Gastrocnemius medialis (tissue), 4 donors: ENCODE measurements at regions of chr5 and their contacts with region 1.

Region 1: DNA sequence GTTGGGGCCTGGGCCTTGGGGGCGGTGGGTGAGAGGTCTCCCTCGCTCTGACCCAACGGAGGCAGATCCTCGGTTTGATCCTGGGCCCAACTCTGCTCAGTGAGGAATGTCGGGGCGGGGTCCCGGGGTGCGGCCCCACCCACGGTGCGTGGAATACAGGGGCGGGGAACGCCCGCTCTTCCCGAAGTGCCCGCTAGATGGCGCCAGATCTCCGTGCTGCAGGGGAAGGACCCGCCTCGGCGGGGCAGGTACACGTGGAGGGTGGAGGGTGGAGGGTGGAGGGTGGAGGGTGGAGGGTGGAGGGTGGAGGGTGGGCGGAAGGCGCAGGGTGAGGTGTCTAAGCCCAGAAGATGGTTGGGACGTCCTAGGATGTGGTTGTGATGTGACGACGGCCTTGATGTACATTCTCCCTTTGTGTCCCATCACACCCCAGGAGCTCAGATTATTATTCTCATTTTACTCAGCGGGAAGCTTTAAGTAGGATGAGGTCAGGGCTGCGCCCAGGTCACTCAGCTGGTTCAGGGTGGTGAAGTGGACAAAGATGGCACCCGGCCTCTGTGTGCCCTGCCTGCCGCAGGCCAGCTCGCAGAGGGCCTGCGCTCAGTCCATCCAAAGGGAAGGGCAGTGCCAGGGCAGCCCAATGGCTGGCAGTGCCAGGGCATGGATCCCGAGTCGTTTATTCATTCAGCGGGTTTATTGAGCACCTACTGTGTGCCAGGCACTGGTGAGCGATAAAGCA is 9.4 kb upstream of the RPS14 start:
- DNase-seq: peak; percentile 29 to 65
- ATAC-seq: peak; percentile 79
- H3K4me3 ChIP-seq: peak overlapping the region in 1 of 4 donors; percentile 29
- H3K27ac ChIP-seq: peak overlapping the region in 3 of 4 donors; percentile 18 to 80 (median 60)
- H3K4me1 ChIP-seq: peaks cover 19 to 23% of the 10 kb centered on the region in 2 donors
- H3K27me3 ChIP-seq: no peaks in the 10 kb centered on the region
- CTCF ChIP-seq: peak; percentile 71 to 96 (median 91)
- POLR2A ChIP-seq: no peak

Region 2: GRCh38 chr5:150320048-150320555 is 138.9 kb before region 1 on chr5:
- in situ Hi-C with region 1: no loop called
- intact Hi-C with region 1: no loop called
- DNase-seq: peak; percentile 71 to 73
- ATAC-seq: peak; percentile 82 to 92
- H3K4me3 ChIP-seq: no peak overlapping the region
- H3K27ac ChIP-seq: peak overlapping the region; percentile 24 to 66 (median 41)
- H3K4me1 ChIP-seq: peaks cover 0 to 9% of the 10 kb centered on the region in 2 donors
- H3K27me3 ChIP-seq: no peaks in the 10 kb centered on the region
- CTCF ChIP-seq: no peak
- POLR2A ChIP-seq: no peak

Region 3: GRCh38 chr5:150428106-150428876 is 30.7 kb before region 1 on chr5:
- in situ Hi-C with region 1: no loop called
- intact Hi-C with region 1: no loop called
- DNase-seq: no peak
- ATAC-seq: peak; percentile 46 to 56
- H3K4me3 ChIP-seq: no peak overlapping the region
- H3K27ac ChIP-seq: peak overlapping the region in 3 of 4 donors; percentile 44 to 58 (median 56)
- H3K4me1 ChIP-seq: peaks cover 0 to 12% of the 10 kb centered on the region in 2 donors
- H3K27me3 ChIP-seq: no peaks in the 10 kb centered on the region
- CTCF ChIP-seq: no peak
- POLR2A ChIP-seq: no peak

Region 4: DNA sequence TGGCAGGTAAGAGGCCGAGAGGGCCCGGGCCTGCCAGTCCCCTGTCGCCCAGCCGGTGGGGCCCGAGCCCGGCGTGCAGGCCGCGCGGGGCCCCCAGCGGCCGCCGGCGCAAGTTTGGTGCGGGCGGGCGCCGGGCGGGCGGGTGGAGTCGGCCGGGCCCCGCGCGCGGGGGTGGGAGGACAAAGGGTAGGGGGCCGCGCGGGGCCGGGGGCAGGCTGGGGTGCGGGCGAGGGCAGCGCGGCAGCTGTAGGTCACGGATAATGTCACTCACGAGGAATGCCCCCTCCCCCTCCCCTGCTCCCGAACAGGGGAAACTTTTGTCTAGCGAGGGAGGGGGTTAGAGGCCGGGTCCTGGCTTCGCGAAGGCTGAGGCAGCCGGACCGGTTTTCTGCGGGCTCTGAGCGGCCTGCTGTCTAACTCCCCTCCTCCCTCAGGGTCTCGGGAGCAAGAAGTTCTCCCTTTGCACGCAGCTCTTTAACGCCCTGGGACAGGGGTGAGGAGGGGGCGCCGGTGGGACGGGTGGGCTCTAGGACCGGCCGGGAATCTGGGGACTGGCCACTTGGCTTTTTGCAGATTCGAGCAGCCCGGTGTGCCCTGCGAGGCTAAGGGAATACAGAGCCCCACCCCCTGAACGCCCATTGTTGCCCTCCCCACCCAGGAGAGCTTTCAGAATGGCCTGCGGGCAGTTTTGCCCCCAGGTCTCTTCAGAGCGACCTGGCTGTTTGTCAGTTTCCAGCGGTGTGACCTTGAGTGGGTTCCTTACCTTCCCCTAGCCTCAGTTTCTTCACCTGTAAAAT is 27.6 kb after region 1 on chr5:
- in situ Hi-C with region 1: no loop called
- intact Hi-C with region 1: loop called (anchors 2 kb)
- DNase-seq: peak in 1 of 2 donors; percentile 58
- ATAC-seq: peak; percentile 35 to 46
- H3K4me3 ChIP-seq: peak overlapping the region; percentile 80 to 100 (median 94)
- H3K27ac ChIP-seq: peak overlapping the region; percentile 83 to 98 (median 95)
- H3K4me1 ChIP-seq: peaks cover 48 to 49% of the 10 kb centered on the region in 2 donors
- H3K27me3 ChIP-seq: no peaks in the 10 kb centered on the region
- CTCF ChIP-seq: peak in 1 of 5 experiments; percentile 9
- POLR2A ChIP-seq: no peak

Region 5: DNA sequence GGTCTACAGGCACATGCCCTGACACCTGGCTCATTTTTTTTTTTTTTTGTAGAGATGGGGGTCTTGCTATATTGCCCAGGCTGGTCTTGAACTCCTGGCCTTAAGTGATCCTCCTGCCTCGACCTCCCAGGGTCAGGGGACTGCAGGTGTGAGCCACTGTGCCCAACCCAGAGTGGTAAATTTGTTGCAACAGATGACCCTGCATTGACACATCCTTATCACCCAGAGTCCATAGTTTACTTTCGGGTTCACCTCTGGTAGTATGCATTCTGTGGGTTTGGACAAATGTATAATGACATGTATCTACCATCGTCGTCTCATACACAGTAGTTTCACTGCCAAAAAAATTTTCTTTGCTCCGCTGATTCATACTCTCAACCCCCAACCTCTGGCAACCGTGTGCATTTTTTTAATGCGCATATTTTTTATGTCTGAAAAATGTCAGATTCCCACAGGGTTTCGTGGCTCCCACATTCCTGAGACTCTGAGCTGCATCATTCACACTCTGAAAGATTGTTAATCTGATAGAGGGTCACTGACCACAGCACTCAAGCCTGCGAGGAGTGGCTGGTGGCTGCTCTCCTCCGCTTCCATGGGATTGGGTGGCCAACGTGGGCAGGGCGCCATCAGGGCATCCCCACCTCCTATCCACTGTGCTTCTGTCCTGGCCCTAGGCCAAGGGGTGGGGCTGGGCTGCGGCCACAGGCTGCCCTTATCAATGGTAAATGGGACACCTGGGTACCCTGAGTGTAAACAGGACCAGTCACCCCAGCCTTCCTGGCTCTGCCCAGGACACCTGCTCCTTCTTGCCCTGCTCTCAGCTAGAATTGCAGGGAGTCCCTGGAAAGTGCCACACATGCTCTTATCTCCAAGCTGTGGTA is 58.5 kb after region 1 on chr5:
- in situ Hi-C with region 1: loop called in 1 of 4 experiments (anchors 10 kb)
- intact Hi-C with region 1: no loop called
- DNase-seq: no peak
- ATAC-seq: no peak
- H3K4me3 ChIP-seq: no peak overlapping the region
- H3K27ac ChIP-seq: peak overlapping the region in 1 of 4 donors; percentile 23
- H3K4me1 ChIP-seq: peaks cover 36 to 52% of the 10 kb centered on the region in 2 donors
- H3K27me3 ChIP-seq: no peaks in the 10 kb centered on the region
- CTCF ChIP-seq: no peak
- POLR2A ChIP-seq: no peak

Region 6: GRCh38 chr5:150523472-150524350 is 64.7 kb after region 1 on chr5:
- in situ Hi-C with region 1: loop called in 1 of 4 experiments (anchors 10 kb)
- intact Hi-C with region 1: loop called (anchors 1 kb)
- DNase-seq: peak in 1 of 2 donors; percentile 46
- ATAC-seq: peak; percentile 42 to 58
- H3K4me3 ChIP-seq: no peak overlapping the region
- H3K27ac ChIP-seq: peak overlapping the region; percentile 21 to 79 (median 75)
- H3K4me1 ChIP-seq: peaks cover 55 to 62% of the 10 kb centered on the region in 2 donors
- H3K27me3 ChIP-seq: no peaks in the 10 kb centered on the region
- CTCF ChIP-seq: peak; percentile 52 to 70 (median 62)
- POLR2A ChIP-seq: no peak

Region 7: GRCh38 chr5:150544611-150545219 is 85.7 kb after region 1 on chr5:
- in situ Hi-C with region 1: loop called (anchors 5 kb)
- intact Hi-C with region 1: loop called (anchors 1 kb)
- DNase-seq: peak; percentile 27 to 60
- ATAC-seq: peak; percentile 54 to 72
- H3K4me3 ChIP-seq: no peak overlapping the region
- H3K27ac ChIP-seq: peak overlapping the region in 1 of 4 donors; percentile 18
- H3K4me1 ChIP-seq: peaks cover 0 to 11% of the 10 kb centered on the region in 2 donors
- H3K27me3 ChIP-seq: no peaks in the 10 kb centered on the region
- CTCF ChIP-seq: peak; percentile 68 to 92 (median 89)
- POLR2A ChIP-seq: no peak

Region 8: GRCh38 chr5:150846654-150847333 is 387.8 kb after region 1 on chr5:
- in situ Hi-C with region 1: no loop called
- intact Hi-C with region 1: loop called (anchors 5 kb)
- DNase-seq: peak; percentile 9 to 17
- ATAC-seq: peak; percentile 74 to 84
- H3K4me3 ChIP-seq: no peak overlapping the region
- H3K27ac ChIP-seq: no peak overlapping the region
- H3K4me1 ChIP-seq: peaks cover 0 to 3% of the 10 kb centered on the region in 2 donors
- H3K27me3 ChIP-seq: no peaks in the 10 kb centered on the region
- CTCF ChIP-seq: peak; percentile 33 to 68 (median 59)
- POLR2A ChIP-seq: no peak